ENCODE measurements at regions of chr6 and their contacts with region 1.

Region 1: GRCh38 chr6:99425647-99426453 is 742 bp upstream of the PNISR start:
- DNase-seq: peak; percentile 73 to 90
- ATAC-seq: peak; percentile 79 to 81
- H3K4me3 ChIP-seq: peak overlapping the region; percentile 76 to 88 (median 84)
- H3K27ac ChIP-seq: peak overlapping the region; percentile 94 to 97 (median 94)
- H3K4me1 ChIP-seq: peaks cover 49 to 53% of the 10 kb centered on the region in 2 donors
- H3K27me3 ChIP-seq: no peaks in the 10 kb centered on the region
- CTCF ChIP-seq: peak in 4 of 5 experiments; percentile 32 to 53 (median 43)
- POLR2A ChIP-seq: no peak

Region 2: GRCh38 chr6:98947351-98948292 is 478.2 kb before region 1 on chr6 and contains the start of gene FBXL4:
- in situ Hi-C with region 1: no loop called
- intact Hi-C with region 1: loop called (anchors 10 kb)
- DNase-seq: peak; percentile 73 to 83
- ATAC-seq: peak; percentile 87 to 89
- H3K4me3 ChIP-seq: peak within 1 kb of the TSS; percentile 70 to 92 (median 76)
- H3K27ac ChIP-seq: peak within 1 kb of the TSS; percentile 80 to 93 (median 88)
- H3K4me1 ChIP-seq: peaks cover 18 to 24% of the 10 kb centered on the region in 2 donors
- H3K27me3 ChIP-seq: no peaks in the 10 kb centered on the region
- CTCF ChIP-seq: peak in 1 of 5 experiments; percentile 9
- POLR2A ChIP-seq: peak; percentile 67 to 80
- total RNA-seq, gene FBXL4: 16.4 to 35.0 (median 22.4) TPM

Region 3: DNA sequence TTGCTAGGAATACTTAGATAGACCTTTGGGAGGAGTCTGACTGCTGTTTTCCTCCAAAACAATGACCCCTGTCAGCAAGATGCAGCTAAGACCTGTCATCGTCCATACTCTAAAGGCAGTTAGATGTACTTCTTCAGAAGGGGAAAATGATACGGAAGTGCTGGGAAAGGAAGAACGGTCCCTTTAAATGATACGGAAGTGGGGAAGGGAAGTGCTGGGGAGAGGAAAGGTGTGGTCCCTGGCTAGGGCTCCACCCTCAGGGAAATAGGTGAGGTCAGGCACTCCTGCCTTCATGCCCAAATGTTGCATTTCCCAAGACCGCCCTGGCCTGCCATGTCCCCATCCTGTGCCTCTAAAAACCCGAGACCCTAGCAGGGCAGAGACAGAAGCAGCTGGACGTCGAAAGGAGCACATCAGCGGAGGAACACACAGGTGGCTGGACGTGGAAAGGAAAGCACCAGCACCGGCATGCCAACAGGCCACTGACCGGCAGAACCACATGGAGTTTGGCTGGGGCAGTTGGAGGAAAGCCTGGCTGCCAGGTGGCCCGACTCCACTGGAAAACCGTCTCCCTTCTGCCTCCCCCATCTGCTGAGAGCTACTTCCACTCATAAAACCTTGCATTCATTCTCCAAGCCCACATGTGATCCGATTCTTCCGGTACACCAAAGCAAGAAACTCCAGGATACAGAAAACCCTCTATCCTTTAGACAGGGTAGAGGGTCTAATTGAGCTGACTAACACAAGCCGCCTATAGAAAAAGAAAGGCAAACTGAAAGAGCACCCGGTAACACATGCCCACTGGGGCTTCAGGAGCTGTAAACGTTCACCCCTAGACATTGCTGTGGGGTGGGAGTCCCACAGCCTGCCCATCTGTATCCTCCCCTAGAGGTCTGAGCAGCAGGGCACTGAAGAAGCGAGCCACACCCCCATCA is 171.0 kb before region 1 on chr6:
- in situ Hi-C with region 1: no loop called
- intact Hi-C with region 1: no loop called
- DNase-seq: no peak
- ATAC-seq: no peak
- H3K4me3 ChIP-seq: no peak overlapping the region
- H3K27ac ChIP-seq: no peak overlapping the region
- H3K4me1 ChIP-seq: no peaks in the 10 kb centered on the region
- H3K27me3 ChIP-seq: no peaks in the 10 kb centered on the region
- CTCF ChIP-seq: no peak
- POLR2A ChIP-seq: no peak

Region 4: GRCh38 chr6:99330159-99330558 is 95.7 kb before region 1 on chr6:
- in situ Hi-C with region 1: no loop called
- intact Hi-C with region 1: loop called (anchors 2 kb)
- DNase-seq: peak in 1 of 2 donors; percentile 18
- ATAC-seq: peak; percentile 39 to 86
- H3K4me3 ChIP-seq: no peak overlapping the region
- H3K27ac ChIP-seq: no peak overlapping the region
- H3K4me1 ChIP-seq: peaks cover 0 to 3% of the 10 kb centered on the region in 2 donors
- H3K27me3 ChIP-seq: no peaks in the 10 kb centered on the region
- CTCF ChIP-seq: peak in 4 of 5 experiments; percentile 28 to 71 (median 44)
- POLR2A ChIP-seq: no peak

Region 5: GRCh38 chr6:99393698-99394531 is 31.9 kb before region 1 on chr6 and contains the start of gene COQ3:
- in situ Hi-C with region 1: no loop called
- intact Hi-C with region 1: loop called (anchors 2 kb)
- DNase-seq: peak; percentile 30 to 53
- ATAC-seq: peak; percentile 73 to 86
- H3K4me3 ChIP-seq: peak within 1 kb of the TSS; percentile 71 to 92 (median 81)
- H3K27ac ChIP-seq: peak within 1 kb of the TSS; percentile 75 to 88 (median 81)
- H3K4me1 ChIP-seq: peaks cover 5% of the 10 kb centered on the region in 2 donors
- H3K27me3 ChIP-seq: no peaks in the 10 kb centered on the region
- CTCF ChIP-seq: no peak
- POLR2A ChIP-seq: no peak
- total RNA-seq, gene COQ3: 4.2 to 11.4 (median 7.3) TPM

Region 6: GRCh38 chr6:99514089-99514488 is 88.2 kb after region 1 on chr6:
- in situ Hi-C with region 1: loop called in 2 of 4 experiments (anchors 10 kb)
- intact Hi-C with region 1: loop called (anchors 2 kb)
- DNase-seq: no peak
- ATAC-seq: no peak
- H3K4me3 ChIP-seq: peak overlapping the region; percentile 61 to 87 (median 74)
- H3K27ac ChIP-seq: peak overlapping the region in 3 of 4 donors; percentile 86 to 95 (median 92)
- H3K4me1 ChIP-seq: peaks cover 15 to 27% of the 10 kb centered on the region in 2 donors
- H3K27me3 ChIP-seq: no peaks in the 10 kb centered on the region
- CTCF ChIP-seq: no peak
- POLR2A ChIP-seq: no peak

Region 7: DNA sequence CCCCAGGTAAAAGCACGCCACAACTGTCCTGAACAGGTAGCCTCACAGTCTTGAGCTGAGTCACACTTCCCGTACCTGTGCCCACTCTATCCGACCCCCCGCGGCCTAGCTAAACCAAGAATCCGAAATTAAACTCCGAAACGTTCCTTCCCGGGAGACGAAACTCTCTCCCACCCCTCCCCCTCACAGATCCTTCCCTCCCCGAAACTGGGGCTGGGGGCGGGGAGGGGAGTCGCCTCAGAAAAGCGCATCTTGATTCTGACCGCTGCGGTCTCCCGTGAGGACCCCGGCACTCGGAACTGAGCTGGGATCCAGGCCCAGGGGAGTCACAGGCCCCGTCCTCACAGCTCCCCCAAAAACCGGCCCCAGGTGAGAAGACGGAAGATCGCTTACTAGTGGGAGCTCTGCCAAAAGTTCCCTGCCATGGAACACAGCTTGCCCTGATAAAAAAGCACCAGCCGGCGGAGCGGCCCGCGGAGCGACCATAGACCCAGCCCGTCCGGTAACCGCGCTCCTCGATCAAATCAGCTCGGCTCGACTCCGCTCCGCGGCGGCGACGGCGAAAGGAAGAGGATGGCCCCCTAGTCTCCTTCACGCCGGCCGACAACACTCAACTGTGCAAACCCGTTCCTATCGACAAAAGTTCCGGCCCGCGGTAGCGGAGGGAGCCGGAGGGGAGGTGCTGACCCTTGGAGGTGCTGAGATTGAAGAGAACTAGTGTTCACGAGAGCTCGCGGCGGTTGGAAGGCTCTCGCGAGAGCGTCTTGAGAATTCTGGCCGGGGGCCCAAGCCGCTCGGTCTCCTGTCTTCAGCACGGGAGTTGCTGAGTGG is 142.5 kb after region 1 on chr6 and contains the start of gene CCNC:
- in situ Hi-C with region 1: no loop called
- intact Hi-C with region 1: loop called (anchors 5 kb)
- DNase-seq: peak; percentile 87 to 95
- ATAC-seq: peak; percentile 98 to 99
- H3K4me3 ChIP-seq: peak within 1 kb of the TSS; percentile 84 to 99 (median 93)
- H3K27ac ChIP-seq: peak within 1 kb of the TSS; percentile 83 to 91 (median 89)
- H3K4me1 ChIP-seq: peaks cover 19 to 31% of the 10 kb centered on the region in 2 donors
- H3K27me3 ChIP-seq: no peaks in the 10 kb centered on the region
- CTCF ChIP-seq: peak in 1 of 5 experiments; percentile 11
- POLR2A ChIP-seq: peak; percentile 74
- total RNA-seq, gene CCNC: 18.1 to 45.4 (median 25.8) TPM

Measured in gastrocnemius medialis (tissue), 4 donors.